ENCODE measurements at regions of chr3 and their contacts with region 1.

Region 1: GRCh38 chr3:8501371-8502131 is at the start of gene LMCD1:
- DNase-seq: peak; percentile 98
- H3K4me3 ChIP-seq: peak within 1 kb of the TSS; percentile 43 to 72 (median 62)
- H3K27ac ChIP-seq: peak within 1 kb of the TSS; percentile 95
- H3K4me1 ChIP-seq: peaks cover 49% of the 10 kb centered on the region
- H3K27me3 ChIP-seq: no peaks in the 10 kb centered on the region
- CTCF ChIP-seq: no peak
- POLR2A ChIP-seq: peak; percentile 43
- total RNA-seq, gene LMCD1: 11.1 and 14.5 TPM in 2 replicates

Region 2: GRCh38 chr3:8482960-8483665 is 18.4 kb before region 1 on chr3:
- CTCF ChIA-PET with region 1: interaction called, 19 read pairs
- POLR2A ChIA-PET with region 1: interaction called, 9 read pairs
- dilution Hi-C with region 1: no loop called
- intact Hi-C with region 1: loop called (anchors 1 kb)
- DNase-seq: peak; percentile 96
- H3K4me3 ChIP-seq: no peak overlapping the region
- H3K27ac ChIP-seq: peak overlapping the region; percentile 66
- H3K4me1 ChIP-seq: peaks cover 16% of the 10 kb centered on the region
- H3K27me3 ChIP-seq: no peaks in the 10 kb centered on the region
- CTCF ChIP-seq: no peak
- POLR2A ChIP-seq: no peak

Region 3: GRCh38 chr3:8529738-8530525 is 28.4 kb after region 1 on chr3:
- CTCF ChIA-PET with region 1: interaction called, 5 read pairs
- POLR2A ChIA-PET with region 1: no interaction called
- dilution Hi-C with region 1: no loop called
- intact Hi-C with region 1: loop called (anchors 1 kb)
- DNase-seq: peak; percentile 36
- H3K4me3 ChIP-seq: no peak overlapping the region
- H3K27ac ChIP-seq: no peak overlapping the region
- H3K4me1 ChIP-seq: peaks cover 16% of the 10 kb centered on the region
- H3K27me3 ChIP-seq: no peaks in the 10 kb centered on the region
- CTCF ChIP-seq: no peak
- POLR2A ChIP-seq: no peak

Region 4: DNA sequence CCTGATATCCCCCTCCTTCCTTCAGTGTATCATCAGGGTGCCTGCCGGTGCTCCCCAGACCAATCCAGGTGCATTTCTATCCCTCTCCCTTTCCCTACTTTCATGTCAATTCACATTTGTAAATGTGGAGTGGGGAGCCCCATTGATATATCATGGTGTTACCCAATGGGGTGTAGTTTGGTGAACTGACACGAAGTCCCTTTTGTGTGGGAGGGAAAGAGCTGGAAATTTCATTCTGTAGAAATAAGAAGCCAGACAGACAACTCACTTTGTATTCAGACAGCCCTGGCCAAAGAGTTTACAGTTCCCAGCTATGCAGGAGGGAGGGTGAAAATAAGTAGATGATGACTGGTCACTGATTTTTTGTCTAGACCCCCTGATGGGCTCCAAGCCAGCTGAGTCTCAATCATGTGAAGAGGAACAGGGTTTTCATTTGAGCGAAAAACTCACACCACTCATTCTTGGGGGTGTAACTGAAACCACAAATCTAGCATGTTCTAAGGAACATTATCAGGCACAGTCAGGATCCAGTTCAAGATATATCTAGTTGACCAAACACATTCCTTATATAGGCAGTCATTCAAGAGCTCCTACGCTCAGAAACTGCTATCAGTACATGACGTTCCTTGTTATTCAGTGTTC is 58.9 kb after region 1 on chr3:
- CTCF ChIA-PET with region 1: interaction called, 3 read pairs
- POLR2A ChIA-PET with region 1: no interaction called
- dilution Hi-C with region 1: no loop called
- intact Hi-C with region 1: loop called (anchors 2 kb)
- DNase-seq: no peak
- H3K4me3 ChIP-seq: no peak overlapping the region
- H3K27ac ChIP-seq: no peak overlapping the region
- H3K4me1 ChIP-seq: peaks cover 12% of the 10 kb centered on the region
- H3K27me3 ChIP-seq: no peaks in the 10 kb centered on the region
- CTCF ChIP-seq: no peak
- POLR2A ChIP-seq: no peak

Region 5: DNA sequence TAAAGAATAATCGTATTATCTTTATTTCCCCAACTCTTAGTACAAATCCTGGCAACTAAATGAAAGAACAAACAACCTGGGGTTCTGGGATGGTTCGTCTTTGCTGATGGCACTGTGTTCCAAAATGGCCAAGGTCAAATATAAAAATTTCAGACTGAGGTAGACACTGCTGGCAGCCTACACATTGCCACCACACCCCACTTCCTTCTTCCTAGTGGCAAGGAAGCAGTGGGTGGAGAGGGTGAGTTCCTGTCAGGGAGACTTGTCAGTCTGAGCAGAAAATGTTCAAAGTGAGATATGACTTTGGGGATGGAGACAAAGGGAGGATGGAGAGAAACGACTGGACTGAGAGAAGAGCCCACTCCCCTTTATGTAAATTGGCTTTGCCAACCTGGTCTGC is 69.7 kb after region 1 on chr3:
- CTCF ChIA-PET with region 1: no interaction called
- POLR2A ChIA-PET with region 1: no interaction called
- dilution Hi-C with region 1: no loop called
- intact Hi-C with region 1: loop called (anchors 2 kb)
- DNase-seq: peak; percentile 26
- H3K4me3 ChIP-seq: no peak overlapping the region
- H3K27ac ChIP-seq: no peak overlapping the region
- H3K4me1 ChIP-seq: peaks cover 14% of the 10 kb centered on the region
- H3K27me3 ChIP-seq: no peaks in the 10 kb centered on the region
- CTCF ChIP-seq: no peak
- POLR2A ChIP-seq: no peak

Region 6: DNA sequence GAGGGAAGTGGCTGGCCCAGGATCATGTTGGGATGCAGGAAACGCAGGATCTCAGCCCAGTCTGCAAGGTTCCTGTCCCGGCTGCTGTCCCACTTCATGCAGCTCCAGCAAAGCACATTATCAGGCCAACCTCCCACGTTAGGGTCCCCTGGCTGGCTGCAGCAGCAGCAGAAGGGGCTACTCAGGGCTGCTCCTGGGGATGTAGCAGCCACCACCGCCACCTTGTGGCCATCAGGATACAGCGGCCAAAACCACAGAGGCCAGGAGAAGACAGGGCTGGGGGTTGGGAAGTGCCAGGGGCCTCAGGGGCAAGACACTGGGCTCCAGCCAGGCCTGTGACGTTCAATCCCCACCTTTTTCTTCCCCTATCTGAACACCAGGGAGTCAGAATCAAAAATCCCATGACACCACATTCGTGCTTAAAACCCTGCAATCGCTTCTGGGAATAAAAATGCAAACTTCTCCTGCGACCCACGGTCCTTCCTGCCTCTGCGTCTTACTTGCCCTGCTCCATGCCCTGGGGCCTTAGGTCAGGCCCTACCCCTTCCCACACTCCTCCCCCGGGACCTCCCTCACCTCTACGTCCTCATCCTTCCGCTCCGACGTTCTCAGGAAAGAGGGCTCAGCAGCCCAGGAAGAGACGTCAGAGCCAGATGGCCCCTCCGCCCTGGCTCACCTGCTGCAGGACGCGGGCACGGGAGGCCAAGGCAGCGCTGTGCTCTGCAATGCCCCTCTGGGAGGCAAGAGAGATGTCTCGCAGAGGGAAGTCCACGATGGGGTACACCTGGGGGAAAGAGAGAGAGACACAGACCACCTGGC is 121.5 kb after region 1 on chr3:
- CTCF ChIA-PET with region 1: interaction called, 5 read pairs
- POLR2A ChIA-PET with region 1: no interaction called
- dilution Hi-C with region 1: no loop called
- intact Hi-C with region 1: loop called (anchors 5 kb)
- DNase-seq: peak; percentile 63
- H3K4me3 ChIP-seq: no peak overlapping the region
- H3K27ac ChIP-seq: no peak overlapping the region
- H3K4me1 ChIP-seq: peaks cover 4% of the 10 kb centered on the region
- H3K27me3 ChIP-seq: no peaks in the 10 kb centered on the region
- CTCF ChIP-seq: peak; percentile 75 to 96
- POLR2A ChIP-seq: no peak

Measured in endothelial cell of umbilical vein (primary cell).